ENCODE measurements at regions of chr6 and their contacts with region 1.

Region 1: GRCh38 chr6:110815217-110816109 is at the start of gene CDK19:
- DNase-seq: peak; percentile 97 to 99
- ATAC-seq: peak; percentile 79 to 92 (median 81)
- H3K4me3 ChIP-seq: peak within 1 kb of the TSS; percentile 70
- H3K4me3 Mint-ChIP-seq: peak within 1 kb of the TSS; percentile 94
- H3K27ac ChIP-seq: peak within 1 kb of the TSS; percentile 93
- H3K27ac Mint-ChIP-seq: peak within 1 kb of the TSS; percentile 98
- H3K4me1 ChIP-seq: peaks cover 13% of the 10 kb centered on the region
- H3K4me1 Mint-ChIP-seq: peaks cover 23 to 27% of the 10 kb centered on the region in 2 donors
- H3K27me3 ChIP-seq: no peaks in the 10 kb centered on the region
- H3K27me3 Mint-ChIP-seq: no peaks in the 10 kb centered on the region
- CTCF ChIP-seq: no peak
- total RNA-seq, gene CDK19: 21.2 to 30.8 (median 25.9) TPM

Region 2: DNA sequence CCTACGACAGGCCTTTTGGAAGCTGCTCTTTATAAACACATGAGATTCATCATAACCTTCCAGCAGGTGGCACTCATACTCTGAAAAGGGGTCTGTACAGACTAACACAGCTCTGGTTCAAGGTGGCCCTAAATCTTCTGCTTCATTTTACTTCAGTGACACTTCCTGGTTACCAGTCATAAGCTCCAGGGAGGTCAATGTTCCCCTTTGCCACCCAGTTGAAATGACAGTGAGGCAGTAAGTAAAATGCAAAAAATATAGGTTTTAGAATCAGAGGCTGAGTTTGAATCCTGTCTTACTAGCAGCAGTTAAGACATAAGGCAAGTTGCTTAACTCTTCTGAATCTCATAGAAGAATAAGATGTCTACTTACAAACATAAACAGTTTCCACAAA is 133.0 kb before region 1 on chr6:
- intact Hi-C with region 1: loop called (anchors 1 kb)
- DNase-seq: peak; percentile 33 to 89
- ATAC-seq: peak; percentile 96 to 99 (median 99)
- H3K4me3 ChIP-seq: no peak overlapping the region
- H3K4me3 Mint-ChIP-seq: no peak overlapping the region
- H3K27ac ChIP-seq: no peak overlapping the region
- H3K27ac Mint-ChIP-seq: peak overlapping the region; percentile 79 to 80
- H3K4me1 ChIP-seq: peaks cover 7% of the 10 kb centered on the region
- H3K4me1 Mint-ChIP-seq: peaks cover 14 to 25% of the 10 kb centered on the region in 2 donors
- H3K27me3 ChIP-seq: no peaks in the 10 kb centered on the region
- H3K27me3 Mint-ChIP-seq: no peaks in the 10 kb centered on the region
- CTCF ChIP-seq: peak; percentile 71

Region 3: DNA sequence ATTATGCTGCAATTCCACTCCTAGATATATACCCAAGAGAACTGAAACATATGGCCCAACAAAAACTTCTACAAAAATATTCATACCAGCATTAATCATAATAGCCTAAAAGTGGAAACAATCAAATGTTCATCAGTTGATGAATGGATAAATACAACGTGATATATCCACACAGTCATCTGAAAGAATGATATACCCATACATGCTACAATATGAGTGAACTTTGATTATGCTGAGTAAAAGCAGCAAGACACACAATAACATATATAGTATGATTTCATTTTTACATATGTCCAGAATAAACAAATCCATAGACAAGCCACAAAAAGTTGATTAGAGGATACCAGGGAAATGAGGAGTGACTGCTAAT is 30.9 kb before region 1 on chr6:
- intact Hi-C with region 1: no loop called
- DNase-seq: no peak
- ATAC-seq: no peak
- H3K4me3 ChIP-seq: no peak overlapping the region
- H3K4me3 Mint-ChIP-seq: no peak overlapping the region
- H3K27ac ChIP-seq: no peak overlapping the region
- H3K27ac Mint-ChIP-seq: peak overlapping the region; percentile 12 to 48
- H3K4me1 ChIP-seq: peaks cover 18% of the 10 kb centered on the region
- H3K4me1 Mint-ChIP-seq: peaks cover 56 to 57% of the 10 kb centered on the region in 2 donors
- H3K27me3 ChIP-seq: no peaks in the 10 kb centered on the region
- H3K27me3 Mint-ChIP-seq: no peaks in the 10 kb centered on the region
- CTCF ChIP-seq: no peak

Region 4: GRCh38 chr6:110841266-110841665 is 25.8 kb after region 1 on chr6:
- intact Hi-C with region 1: no loop called
- DNase-seq: no peak
- ATAC-seq: no peak
- H3K4me3 ChIP-seq: no peak overlapping the region
- H3K4me3 Mint-ChIP-seq: no peak overlapping the region
- H3K27ac ChIP-seq: no peak overlapping the region
- H3K27ac Mint-ChIP-seq: no peak overlapping the region
- H3K4me1 ChIP-seq: no peaks in the 10 kb centered on the region
- H3K4me1 Mint-ChIP-seq: peaks cover 0 to 6% of the 10 kb centered on the region in 2 donors
- H3K27me3 ChIP-seq: no peaks in the 10 kb centered on the region
- H3K27me3 Mint-ChIP-seq: no peaks in the 10 kb centered on the region
- CTCF ChIP-seq: no peak

Region 5: GRCh38 chr6:110873981-110874879 is 58.8 kb after region 1 on chr6 and contains the start of gene AMD1:
- intact Hi-C with region 1: loop called (anchors 1 kb)
- DNase-seq: peak; percentile 94 to 98
- ATAC-seq: peak; percentile 68 to 90 (median 80)
- H3K4me3 ChIP-seq: peak within 1 kb of the TSS; percentile 82
- H3K4me3 Mint-ChIP-seq: peak within 1 kb of the TSS; percentile 98
- H3K27ac ChIP-seq: peak within 1 kb of the TSS; percentile 87
- H3K27ac Mint-ChIP-seq: peak within 1 kb of the TSS; percentile 96 to 97
- H3K4me1 ChIP-seq: peaks cover 24% of the 10 kb centered on the region
- H3K4me1 Mint-ChIP-seq: peaks cover 34 to 43% of the 10 kb centered on the region in 2 donors
- H3K27me3 ChIP-seq: no peaks in the 10 kb centered on the region
- H3K27me3 Mint-ChIP-seq: no peaks in the 10 kb centered on the region
- CTCF ChIP-seq: no peak
- total RNA-seq, gene AMD1: 109 to 175 (median 113) TPM

Region 6: GRCh38 chr6:110958329-110959192 is 143.1 kb after region 1 on chr6 and contains the start of gene GTF3C6:
- intact Hi-C with region 1: loop called (anchors 1 kb)
- DNase-seq: peak; percentile 89 to 95
- ATAC-seq: peak; percentile 99 to 100 (median 99)
- H3K4me3 ChIP-seq: peak within 1 kb of the TSS; percentile 100
- H3K4me3 Mint-ChIP-seq: peak within 1 kb of the TSS; percentile 96
- H3K27ac ChIP-seq: peak within 1 kb of the TSS; percentile 91
- H3K27ac Mint-ChIP-seq: peak within 1 kb of the TSS; percentile 91 to 98
- H3K4me1 ChIP-seq: peaks cover 14% of the 10 kb centered on the region
- H3K4me1 Mint-ChIP-seq: peaks cover 16 to 21% of the 10 kb centered on the region in 2 donors
- H3K27me3 ChIP-seq: no peaks in the 10 kb centered on the region
- H3K27me3 Mint-ChIP-seq: peaks cover 0 to 3% of the 10 kb centered on the region in 2 donors
- CTCF ChIP-seq: no peak
- total RNA-seq, gene GTF3C6: 28.2 to 36.0 (median 33.8) TPM

Region 7: DNA sequence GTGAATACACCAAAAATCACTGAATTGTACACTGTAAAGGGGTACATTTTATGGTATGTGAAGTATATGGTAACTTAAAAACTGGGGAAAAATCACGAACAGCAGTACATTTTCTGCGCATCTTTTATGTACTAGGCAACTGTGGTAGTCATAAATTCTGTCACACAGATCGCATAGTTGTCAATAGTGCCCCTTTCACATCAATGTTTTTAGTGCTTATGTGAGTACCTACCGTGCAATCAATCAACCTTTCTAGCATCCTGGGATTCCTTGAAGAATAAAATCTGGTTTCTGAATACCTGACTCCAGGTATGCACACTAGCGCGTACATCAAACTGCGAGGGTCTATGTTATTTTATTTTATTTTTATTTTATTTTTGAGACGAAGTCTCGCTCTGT is 165.7 kb after region 1 on chr6:
- intact Hi-C with region 1: loop called (anchors 5 kb)
- DNase-seq: peak in 1 of 2 donors; percentile 50
- ATAC-seq: no peak
- H3K4me3 ChIP-seq: peak overlapping the region; percentile 76
- H3K4me3 Mint-ChIP-seq: peak overlapping the region; percentile 95
- H3K27ac ChIP-seq: peak overlapping the region; percentile 77
- H3K27ac Mint-ChIP-seq: peak overlapping the region; percentile 95 to 99
- H3K4me1 ChIP-seq: peaks cover 15% of the 10 kb centered on the region
- H3K4me1 Mint-ChIP-seq: peaks cover 33 to 43% of the 10 kb centered on the region in 2 donors
- H3K27me3 ChIP-seq: no peaks in the 10 kb centered on the region
- H3K27me3 Mint-ChIP-seq: no peaks in the 10 kb centered on the region
- CTCF ChIP-seq: no peak